Activated CD4-positive, alpha-beta T cell treated with anti-CD3 and anti-CD28 coated beads, Interleukin-2, amount 10 ng/mL, durations not matched to agents 24 days and 14 days (primary cell): ENCODE measurements at regions of chr20 and their contacts with region 1.

Region 1: GRCh38 chr20:4989570-4989969 is 11.7 kb downstream of the SLC23A2 start:
- DNase-seq: no peak
- H3K4me3 Mint-ChIP-seq: peak overlapping the region; percentile 16
- H3K27ac Mint-ChIP-seq: peak overlapping the region; percentile 77
- H3K4me1 Mint-ChIP-seq: peaks cover 19% of the 10 kb centered on the region
- H3K27me3 Mint-ChIP-seq: no peaks in the 10 kb centered on the region

Region 2: GRCh38 chr20:4795394-4795793 is 194.2 kb before region 1 on chr20:
- intact Hi-C with region 1: no loop called
- DNase-seq: no peak
- H3K4me3 Mint-ChIP-seq: no peak overlapping the region
- H3K27ac Mint-ChIP-seq: peak overlapping the region; percentile 72
- H3K4me1 Mint-ChIP-seq: peaks cover 24% of the 10 kb centered on the region
- H3K27me3 Mint-ChIP-seq: no peaks in the 10 kb centered on the region

Region 3: DNA sequence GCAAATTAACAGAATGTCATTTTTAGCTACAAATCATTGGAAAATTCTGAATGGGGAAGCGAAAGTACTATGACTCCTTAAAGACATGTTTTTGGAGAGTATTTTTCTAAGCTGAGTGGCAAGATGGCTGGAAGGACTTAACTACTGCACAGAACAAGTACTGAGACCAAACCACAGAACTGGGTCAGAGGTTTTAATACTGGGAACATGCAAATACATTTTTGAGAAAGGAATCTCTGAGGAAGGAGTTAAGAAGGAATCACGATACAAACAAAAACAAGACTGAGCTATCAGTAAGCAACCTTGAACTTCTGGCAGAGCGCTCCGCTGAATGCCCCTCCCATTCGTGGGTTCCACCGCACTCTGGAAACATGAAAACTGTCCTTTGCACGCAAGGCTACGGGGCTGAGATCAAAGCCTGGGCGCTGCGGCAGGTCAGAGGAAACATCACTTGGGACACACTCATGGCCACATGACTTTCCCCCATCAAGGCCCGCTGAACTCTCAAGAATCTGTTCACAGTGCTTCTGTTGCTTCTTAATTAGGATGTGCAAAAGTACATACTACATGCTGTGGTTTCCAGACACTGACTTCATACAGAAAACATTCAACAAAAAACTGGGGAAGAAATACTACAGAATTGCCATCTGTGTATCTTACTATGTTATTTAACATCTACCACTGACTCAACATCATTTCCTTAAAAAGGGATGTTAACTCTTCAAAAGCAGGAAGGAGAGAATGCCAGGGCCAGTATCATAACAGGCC is 16.1 kb before region 1 on chr20:
- intact Hi-C with region 1: loop called (anchors 2 kb)
- DNase-seq: peak; percentile 90
- H3K4me3 Mint-ChIP-seq: peak overlapping the region; percentile 83
- H3K27ac Mint-ChIP-seq: peak overlapping the region; percentile 94
- H3K4me1 Mint-ChIP-seq: peaks cover 19% of the 10 kb centered on the region
- H3K27me3 Mint-ChIP-seq: no peaks in the 10 kb centered on the region

Region 4: DNA sequence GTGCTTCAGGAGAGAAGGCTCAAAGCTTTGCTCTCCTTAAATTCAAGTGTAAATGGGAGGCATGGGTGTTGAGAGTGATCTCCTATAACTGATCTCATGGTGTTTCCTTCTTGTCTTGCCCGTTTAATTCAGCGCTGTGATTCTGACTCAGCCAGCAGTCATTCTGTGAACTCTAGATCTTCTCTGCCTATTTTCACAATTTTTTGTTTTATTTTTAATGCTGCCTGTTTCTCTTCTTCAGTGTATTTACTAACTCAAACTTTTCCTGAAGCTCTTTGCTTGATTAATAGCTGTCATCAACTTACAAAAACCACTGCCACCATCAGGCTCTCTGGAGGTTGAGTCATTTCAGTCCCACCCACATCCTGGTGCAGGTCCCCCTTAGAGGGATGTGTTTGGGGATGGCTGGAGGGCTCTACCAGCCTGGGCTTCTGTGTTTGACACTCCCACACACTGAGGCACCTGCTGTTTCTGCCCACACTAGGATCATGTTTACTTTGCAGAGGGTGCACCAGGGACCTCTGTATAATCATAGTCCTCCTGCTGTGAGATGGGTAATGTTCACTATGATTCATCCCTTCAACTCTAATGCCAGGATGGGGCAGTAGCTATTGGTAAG is 854.6 kb after region 1 on chr20:
- intact Hi-C with region 1: no loop called
- DNase-seq: peak; percentile 84
- H3K4me3 Mint-ChIP-seq: peak overlapping the region; percentile 65
- H3K27ac Mint-ChIP-seq: peak overlapping the region; percentile 93
- H3K4me1 Mint-ChIP-seq: peaks cover 39% of the 10 kb centered on the region
- H3K27me3 Mint-ChIP-seq: peaks cover 2% of the 10 kb centered on the region